ENCODE measurements at regions of chr10 and their contacts with region 1.

Region 1: GRCh38 chr10:94439275-94439861 is 37.0 kb downstream of the TBC1D12 start:
- DNase-seq: no peak
- ATAC-seq: no peak
- H3K4me3 ChIP-seq: no peak overlapping the region
- H3K4me3 Mint-ChIP-seq: no peak overlapping the region
- H3K27ac ChIP-seq: no peak overlapping the region
- H3K27ac Mint-ChIP-seq: no peak overlapping the region
- H3K4me1 ChIP-seq: no peaks in the 10 kb centered on the region
- H3K4me1 Mint-ChIP-seq: peaks cover 2% of the 10 kb centered on the region
- H3K27me3 ChIP-seq: no peaks in the 10 kb centered on the region
- H3K27me3 Mint-ChIP-seq: no peaks in the 10 kb centered on the region
- CTCF ChIP-seq: no peak

Region 2: GRCh38 chr10:94274142-94274787 is 165.1 kb before region 1 on chr10:
- CTCF ChIA-PET with region 1: interaction called, 48 read pairs
- POLR2A ChIA-PET with region 1: no interaction called
- intact Hi-C with region 1: no loop called
- DNase-seq: no peak
- ATAC-seq: no peak
- H3K4me3 ChIP-seq: no peak overlapping the region
- H3K4me3 Mint-ChIP-seq: no peak overlapping the region
- H3K27ac ChIP-seq: no peak overlapping the region
- H3K27ac Mint-ChIP-seq: no peak overlapping the region
- H3K4me1 ChIP-seq: no peaks in the 10 kb centered on the region
- H3K4me1 Mint-ChIP-seq: no peaks in the 10 kb centered on the region
- H3K27me3 ChIP-seq: peaks cover 0 to 5% (median 0%) of the 10 kb centered on the region in 4 experiments
- H3K27me3 Mint-ChIP-seq: peaks cover 3% of the 10 kb centered on the region
- CTCF ChIP-seq: no peak

Region 3: DNA sequence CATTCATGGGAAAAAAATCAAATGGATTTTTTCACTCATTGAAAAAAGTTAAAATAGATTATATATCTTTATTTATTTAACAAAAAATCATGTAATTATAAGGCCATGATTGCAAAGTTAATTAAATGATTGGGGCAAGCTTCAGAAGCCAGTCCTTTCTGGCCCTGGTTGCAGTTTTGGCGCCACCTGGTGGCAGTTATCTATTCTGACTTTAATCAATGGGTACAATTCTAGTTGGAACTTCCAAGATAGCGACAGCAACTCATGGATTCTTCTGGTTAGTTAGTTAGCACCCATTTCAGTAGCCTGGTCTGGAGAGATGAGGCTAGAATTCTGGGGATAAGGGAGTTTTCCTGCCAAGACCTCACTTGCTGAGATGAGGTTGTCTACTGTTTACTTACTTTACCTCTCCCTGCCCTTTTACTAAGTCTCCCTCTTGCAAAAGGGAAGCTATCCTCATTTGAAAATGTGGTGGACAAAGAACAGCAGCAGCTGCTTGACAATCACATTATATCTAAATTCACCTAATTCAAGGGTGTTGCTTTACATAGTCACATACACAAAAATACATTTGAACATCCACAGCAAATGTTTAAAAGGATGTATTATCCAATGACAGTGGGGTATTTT is 119.0 kb before region 1 on chr10:
- CTCF ChIA-PET with region 1: interaction called, 21 read pairs
- POLR2A ChIA-PET with region 1: no interaction called
- intact Hi-C with region 1: no loop called
- DNase-seq: peak; percentile 65
- ATAC-seq: no peak
- H3K4me3 ChIP-seq: no peak overlapping the region
- H3K4me3 Mint-ChIP-seq: no peak overlapping the region
- H3K27ac ChIP-seq: no peak overlapping the region
- H3K27ac Mint-ChIP-seq: no peak overlapping the region
- H3K4me1 ChIP-seq: no peaks in the 10 kb centered on the region
- H3K4me1 Mint-ChIP-seq: no peaks in the 10 kb centered on the region
- H3K27me3 ChIP-seq: no peaks in the 10 kb centered on the region
- H3K27me3 Mint-ChIP-seq: no peaks in the 10 kb centered on the region
- CTCF ChIP-seq: peak; percentile 96

Region 4: GRCh38 chr10:94402015-94402842 is 37.1 kb before region 1 on chr10 and contains the start of gene TBC1D12:
- CTCF ChIA-PET with region 1: interaction called, 6 read pairs
- POLR2A ChIA-PET with region 1: no interaction called
- intact Hi-C with region 1: loop called (anchors 1 kb)
- DNase-seq: peak; percentile 76
- ATAC-seq: peak; percentile 35
- H3K4me3 ChIP-seq: peak within 1 kb of the TSS; percentile 7 to 92 (median 79)
- H3K4me3 Mint-ChIP-seq: peak within 1 kb of the TSS; percentile 94
- H3K27ac ChIP-seq: peak within 1 kb of the TSS; percentile 76 to 86
- H3K27ac Mint-ChIP-seq: peak within 1 kb of the TSS; percentile 96
- H3K4me1 ChIP-seq: peaks cover 13 to 15% of the 10 kb centered on the region in 2 donors
- H3K4me1 Mint-ChIP-seq: peaks cover 15% of the 10 kb centered on the region
- H3K27me3 ChIP-seq: peaks cover 0 to 8% (median 0%) of the 10 kb centered on the region in 4 experiments
- H3K27me3 Mint-ChIP-seq: peaks cover 23% of the 10 kb centered on the region
- CTCF ChIP-seq: no peak
- total RNA-seq, gene TBC1D12: 9.3 and 9.6 TPM in 2 replicates

Region 5: GRCh38 chr10:94459385-94459784 is 20.0 kb after region 1 on chr10:
- CTCF ChIA-PET with region 1: interaction called, 12 read pairs
- POLR2A ChIA-PET with region 1: no interaction called
- intact Hi-C with region 1: no loop called
- DNase-seq: no peak
- ATAC-seq: no peak
- H3K4me3 ChIP-seq: no peak overlapping the region
- H3K4me3 Mint-ChIP-seq: no peak overlapping the region
- H3K27ac ChIP-seq: no peak overlapping the region
- H3K27ac Mint-ChIP-seq: no peak overlapping the region
- H3K4me1 ChIP-seq: no peaks in the 10 kb centered on the region
- H3K4me1 Mint-ChIP-seq: peaks cover 2% of the 10 kb centered on the region
- H3K27me3 ChIP-seq: no peaks in the 10 kb centered on the region
- H3K27me3 Mint-ChIP-seq: no peaks in the 10 kb centered on the region
- CTCF ChIP-seq: no peak